ENCODE measurements at regions of chr1 and their contacts with region 1.

Region 1: DNA sequence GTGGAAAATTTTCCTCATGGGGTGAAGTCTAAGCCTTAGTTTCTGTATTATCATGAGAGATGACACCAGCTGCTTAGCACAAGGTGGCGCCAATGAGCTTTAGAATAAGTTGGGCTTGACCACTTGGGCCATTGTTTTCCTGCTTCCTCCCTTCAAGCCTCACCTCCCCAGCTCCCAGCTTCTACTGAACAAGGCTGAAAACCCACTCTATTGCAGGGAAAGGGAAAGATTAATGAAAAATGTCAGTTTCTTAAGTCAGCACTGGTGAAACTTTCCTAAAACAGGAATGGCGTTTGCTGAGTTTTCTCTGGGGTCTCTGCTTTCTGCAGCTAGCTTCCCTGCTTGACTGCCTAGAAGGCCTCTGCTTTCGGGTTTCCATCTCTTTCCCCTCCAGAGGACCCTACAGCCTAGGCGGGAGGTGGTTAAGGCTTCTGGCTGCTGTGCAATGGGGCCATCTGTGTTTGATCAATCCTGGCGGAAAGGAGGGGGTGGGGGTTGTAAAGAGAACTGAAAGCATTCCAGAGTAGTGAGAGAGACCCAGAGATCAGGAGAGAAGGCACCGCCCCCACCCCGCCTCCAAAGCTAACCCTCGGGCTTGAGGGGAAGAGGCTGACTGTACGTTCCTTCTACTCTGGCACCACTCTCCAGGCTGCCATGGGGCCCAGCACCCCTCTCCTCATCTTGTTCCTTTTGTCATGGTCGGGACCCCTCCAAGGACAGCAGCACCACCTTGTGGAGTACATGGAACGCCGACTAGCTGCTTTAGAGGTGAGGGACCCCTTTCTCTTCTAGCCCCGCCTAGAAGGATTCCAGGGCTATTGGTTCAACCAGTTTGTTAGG is at the start of gene OLFML3:
- DNase-seq: peak; percentile 98
- H3K4me3 ChIP-seq: peak within 1 kb of the TSS; percentile 56
- H3K27ac ChIP-seq: peak within 1 kb of the TSS; percentile 96
- H3K4me1 ChIP-seq: peaks cover 66% of the 10 kb centered on the region
- H3K27me3 ChIP-seq: no peaks in the 10 kb centered on the region
- CTCF ChIP-seq: peak; percentile 77
- total RNA-seq, gene OLFML3: 319 and 349 TPM in 2 replicates

Region 2: DNA sequence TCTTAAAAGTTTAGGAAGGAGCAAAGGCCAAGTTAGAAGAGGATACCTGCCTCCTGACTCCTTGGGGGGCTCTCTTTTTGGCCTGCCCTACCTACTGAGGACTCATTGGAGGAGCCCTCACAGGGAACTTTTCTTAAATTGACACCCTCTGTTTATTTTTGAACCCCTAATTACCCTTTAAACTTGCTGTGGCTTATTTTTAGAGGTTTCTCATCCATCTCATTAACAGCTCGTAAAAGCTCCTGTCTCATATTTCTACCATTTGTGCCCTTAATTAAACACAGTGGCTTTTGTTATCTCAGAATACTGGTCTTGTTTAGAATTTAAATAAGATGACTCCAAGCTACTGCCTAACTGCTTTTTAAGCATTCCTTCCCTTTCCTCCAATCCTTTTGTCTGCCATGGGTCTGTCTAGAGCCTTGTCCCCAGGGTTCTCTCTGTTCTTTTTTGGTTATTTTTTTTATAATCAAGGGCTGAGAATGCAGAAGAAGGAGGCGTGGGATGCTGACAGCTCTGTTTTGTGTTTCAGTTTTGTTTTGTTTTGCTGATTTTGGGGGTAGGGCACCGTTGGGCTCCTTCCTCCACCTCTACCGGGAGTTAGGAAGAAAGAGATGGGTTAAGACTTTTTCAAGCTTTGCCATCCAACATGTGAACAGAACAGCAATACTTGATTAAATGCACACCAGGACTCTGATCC is 96.6 kb after region 1 on chr1:
- CTCF ChIA-PET with region 1: no interaction called
- POLR2A ChIA-PET with region 1: interaction called, 3 read pairs
- intact Hi-C with region 1: loop called (anchors 10 kb)
- DNase-seq: no peak
- H3K4me3 ChIP-seq: no peak overlapping the region
- H3K27ac ChIP-seq: peak overlapping the region; percentile 9
- H3K4me1 ChIP-seq: peaks cover 21% of the 10 kb centered on the region
- H3K27me3 ChIP-seq: no peaks in the 10 kb centered on the region
- CTCF ChIP-seq: no peak

Region 3: DNA sequence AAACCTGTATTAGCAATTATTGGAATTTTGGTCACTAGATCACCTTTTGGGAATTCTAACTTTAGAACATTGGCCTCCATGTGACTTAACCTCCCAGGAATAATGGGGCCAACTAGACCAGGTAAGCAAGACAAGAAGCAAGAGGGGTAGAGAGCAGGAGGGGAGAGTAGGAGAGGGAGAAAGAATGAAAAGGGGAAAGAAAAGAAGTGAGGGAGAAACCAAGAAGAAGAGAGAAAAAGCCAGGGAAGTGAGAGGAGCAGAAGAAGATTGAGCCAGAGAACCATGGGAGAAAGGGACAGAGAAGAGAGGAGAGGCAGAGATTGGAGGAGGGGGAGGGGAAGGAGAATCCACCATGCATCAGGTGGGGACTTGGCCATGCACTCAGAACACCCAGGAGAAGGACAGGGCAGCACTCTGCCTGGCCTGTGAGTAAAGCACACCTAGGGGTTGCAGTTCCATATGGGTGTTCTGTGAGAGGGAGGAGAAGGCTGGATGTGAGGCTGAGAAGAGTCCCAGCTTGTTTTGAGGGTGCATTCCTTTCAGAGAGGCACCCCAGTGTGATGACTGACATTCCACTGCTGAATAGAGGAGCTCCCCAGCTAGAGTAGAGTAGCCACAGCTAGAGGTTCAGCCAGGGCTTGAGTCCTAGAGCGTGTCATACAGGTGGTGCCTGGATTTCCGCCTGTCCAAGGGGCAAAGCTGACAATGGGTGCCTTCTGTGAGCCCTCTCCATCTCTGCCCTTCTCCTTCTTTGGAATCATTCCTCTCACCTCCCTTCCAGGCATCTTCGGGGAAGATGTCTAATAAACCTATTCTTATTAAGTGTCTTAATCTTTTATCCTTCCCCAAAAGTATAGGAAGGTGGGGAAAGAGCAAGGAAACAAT is 217.8 kb after region 1 on chr1:
- CTCF ChIA-PET with region 1: interaction called, 8 read pairs
- POLR2A ChIA-PET with region 1: interaction called, 3 read pairs
- intact Hi-C with region 1: loop called (anchors 1 kb)
- DNase-seq: peak; percentile 96
- H3K4me3 ChIP-seq: no peak overlapping the region
- H3K27ac ChIP-seq: peak overlapping the region; percentile 99
- H3K4me1 ChIP-seq: peaks cover 63% of the 10 kb centered on the region
- H3K27me3 ChIP-seq: no peaks in the 10 kb centered on the region
- CTCF ChIP-seq: no peak

Region 4: GRCh38 chr1:114282751-114283403 is 303.8 kb after region 1 on chr1:
- CTCF ChIA-PET with region 1: interaction called, 41 read pairs
- POLR2A ChIA-PET with region 1: no interaction called
- intact Hi-C with region 1: loop called (anchors 2 kb)
- DNase-seq: peak; percentile 96
- H3K4me3 ChIP-seq: no peak overlapping the region
- H3K27ac ChIP-seq: peak overlapping the region; percentile 16
- H3K4me1 ChIP-seq: peaks cover 34% of the 10 kb centered on the region
- H3K27me3 ChIP-seq: no peaks in the 10 kb centered on the region
- CTCF ChIP-seq: peak; percentile 94

Region 5: DNA sequence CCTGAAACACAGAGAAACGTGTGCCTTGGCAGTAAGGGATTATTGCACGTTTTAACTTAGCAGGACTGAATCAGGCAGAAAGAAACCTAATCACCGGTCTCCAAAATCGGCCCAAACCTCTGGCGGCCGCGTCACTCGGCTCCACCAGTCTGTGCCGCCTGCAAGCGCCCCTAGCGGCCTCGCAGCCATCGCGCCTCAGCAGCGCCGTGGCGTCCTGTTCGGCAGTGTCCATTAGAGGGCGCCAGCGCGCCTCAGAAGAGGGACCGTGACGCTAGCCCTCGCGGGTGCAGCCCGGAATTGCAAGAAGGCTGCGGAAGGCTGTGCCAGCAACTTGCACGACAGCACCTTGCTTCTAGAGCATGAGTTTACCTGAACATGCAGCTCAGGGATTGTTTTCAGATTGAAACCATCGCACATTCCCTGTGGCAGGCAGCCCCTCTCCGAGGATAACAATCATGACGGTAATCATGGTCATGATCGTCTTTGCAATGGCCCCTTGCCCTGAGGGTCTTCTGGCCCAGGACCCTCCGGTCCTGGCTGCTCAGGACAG is 367.5 kb after region 1 on chr1:
- CTCF ChIA-PET with region 1: no interaction called
- POLR2A ChIA-PET with region 1: no interaction called
- intact Hi-C with region 1: loop called (anchors 5 kb)
- DNase-seq: peak; percentile 97
- H3K4me3 ChIP-seq: peak overlapping the region; percentile 28
- H3K27ac ChIP-seq: peak overlapping the region; percentile 40
- H3K4me1 ChIP-seq: peaks cover 14% of the 10 kb centered on the region
- H3K27me3 ChIP-seq: no peaks in the 10 kb centered on the region
- CTCF ChIP-seq: peak; percentile 100

Region 6: DNA sequence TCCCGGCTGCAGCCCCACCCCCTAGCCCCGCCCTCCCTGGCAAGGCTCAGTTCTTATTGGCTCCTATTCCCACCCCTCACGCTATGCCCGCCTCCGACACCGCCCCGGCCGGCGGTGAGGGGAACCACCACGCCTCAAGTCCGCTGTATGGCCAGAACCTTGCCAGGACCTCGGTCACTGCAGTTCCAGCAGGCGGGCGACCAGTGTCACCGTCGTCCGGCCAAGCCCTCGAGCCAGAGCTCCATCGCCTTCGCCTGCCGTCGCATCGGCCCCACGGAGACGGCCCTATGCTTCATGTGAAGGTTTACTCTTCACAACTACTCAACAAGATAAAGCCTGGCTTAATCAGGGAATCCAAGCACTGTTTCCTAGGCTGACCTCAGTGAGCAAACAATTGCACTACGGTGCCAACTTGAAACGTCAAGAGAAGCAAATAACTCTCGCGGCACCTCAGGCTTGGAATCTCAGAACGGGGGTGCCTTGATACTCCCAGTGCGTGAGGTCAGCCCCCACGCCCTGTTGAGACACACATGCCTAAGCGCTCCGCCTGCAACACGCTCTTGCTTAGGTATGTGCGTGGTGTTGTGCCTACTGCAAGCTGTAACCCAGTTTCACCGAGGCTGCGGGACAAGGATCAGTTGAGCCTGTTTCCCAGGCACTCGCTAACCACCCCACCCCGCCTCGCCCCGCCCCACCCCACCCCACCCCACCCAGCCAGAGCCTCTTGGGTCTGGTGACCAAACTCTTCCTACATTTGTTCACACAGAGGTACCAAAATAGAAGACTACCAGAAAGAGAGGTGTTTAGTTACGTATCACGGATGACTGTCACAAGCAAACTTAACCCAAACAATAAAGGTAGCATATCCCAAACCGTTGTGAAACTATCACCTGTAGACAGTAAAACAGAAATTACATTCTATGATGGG is 691.3 kb after region 1 on chr1:
- CTCF ChIA-PET with region 1: interaction called, 4 read pairs
- POLR2A ChIA-PET with region 1: no interaction called
- intact Hi-C with region 1: loop called (anchors 5 kb)
- DNase-seq: peak; percentile 92
- H3K4me3 ChIP-seq: peak overlapping the region; percentile 70
- H3K27ac ChIP-seq: no peak overlapping the region
- H3K4me1 ChIP-seq: no peaks in the 10 kb centered on the region
- H3K27me3 ChIP-seq: no peaks in the 10 kb centered on the region
- CTCF ChIP-seq: no peak

Measured in A673 (cell line).